ENCODE measurements at regions of chr1 and their contacts with region 1.

Region 1: DNA sequence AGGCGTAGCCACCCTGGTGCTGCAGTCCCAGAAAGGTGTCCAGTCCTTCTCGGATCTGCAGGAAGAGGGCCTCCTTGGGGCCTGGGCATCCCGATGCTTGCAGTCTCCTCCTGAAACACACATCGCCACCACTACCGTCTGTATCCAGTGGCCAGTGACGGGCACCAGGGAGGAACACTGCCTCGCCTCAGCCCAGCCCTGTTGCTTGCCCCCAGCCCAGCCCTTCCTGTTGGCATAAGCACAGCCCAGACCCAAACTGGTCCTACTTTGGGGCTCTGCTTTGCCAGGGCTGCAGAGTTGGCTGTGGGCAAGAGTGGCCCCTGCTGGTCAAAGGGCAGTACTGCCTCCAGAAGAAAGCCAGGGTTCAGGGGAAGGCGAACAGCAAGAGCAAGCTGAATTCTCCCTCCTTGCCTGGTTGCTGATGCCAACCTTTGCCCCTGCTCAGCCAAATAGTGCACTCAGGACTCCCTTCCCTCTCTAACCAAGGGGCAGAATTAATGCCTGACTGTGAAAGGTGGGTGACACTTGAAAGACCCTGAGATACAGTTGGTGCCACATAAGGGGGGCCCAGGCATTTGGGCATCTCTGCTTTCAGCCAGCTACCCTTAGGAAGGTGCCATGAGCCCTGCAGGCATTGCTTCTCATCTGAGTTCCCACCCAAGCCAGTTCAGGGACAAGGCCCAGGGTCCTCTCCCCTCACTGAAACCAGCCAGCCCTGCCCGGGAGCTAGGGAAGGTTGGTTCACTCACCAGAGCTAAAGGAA is 11.1 kb upstream of the ARHGEF2 start:
- DNase-seq: peak; percentile 93

Region 2: GRCh38 chr1:155938220-155938627 is 51.2 kb before region 1 on chr1:
- intact Hi-C with region 1: loop called in 1 of 2 experiments (anchors 1 kb)
- DNase-seq: no peak

Region 3: DNA sequence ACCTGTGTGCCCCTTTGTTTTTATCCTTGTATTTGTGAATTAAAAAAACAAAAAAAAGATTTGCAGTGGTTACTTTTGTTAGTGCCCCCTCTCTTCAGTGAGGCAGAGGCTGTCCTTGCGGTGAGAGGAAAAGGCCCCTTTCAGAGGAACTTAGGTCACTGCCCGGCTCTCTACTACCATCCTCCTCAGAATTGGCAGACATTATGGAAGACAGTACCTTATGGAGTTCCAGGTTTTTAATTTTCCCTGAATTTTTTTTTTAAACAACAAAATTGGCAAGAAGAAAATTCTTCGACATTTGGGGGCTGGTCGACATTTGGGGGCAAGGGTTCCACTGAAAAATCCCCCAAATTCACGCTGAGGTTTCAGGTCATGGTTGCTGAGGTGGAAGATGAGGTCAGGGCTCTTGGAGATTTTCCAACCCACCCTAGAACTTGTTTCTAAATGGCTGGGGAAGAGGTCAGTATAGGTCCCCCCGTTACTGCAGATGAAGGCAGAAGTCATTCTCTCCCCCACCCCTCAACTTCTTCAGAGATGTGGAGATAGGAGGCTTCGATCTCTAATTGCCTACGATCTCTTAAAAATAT is 42.7 kb before region 1 on chr1:
- intact Hi-C with region 1: loop called in 1 of 2 experiments (anchors 5 kb)
- DNase-seq: no peak

Region 4: DNA sequence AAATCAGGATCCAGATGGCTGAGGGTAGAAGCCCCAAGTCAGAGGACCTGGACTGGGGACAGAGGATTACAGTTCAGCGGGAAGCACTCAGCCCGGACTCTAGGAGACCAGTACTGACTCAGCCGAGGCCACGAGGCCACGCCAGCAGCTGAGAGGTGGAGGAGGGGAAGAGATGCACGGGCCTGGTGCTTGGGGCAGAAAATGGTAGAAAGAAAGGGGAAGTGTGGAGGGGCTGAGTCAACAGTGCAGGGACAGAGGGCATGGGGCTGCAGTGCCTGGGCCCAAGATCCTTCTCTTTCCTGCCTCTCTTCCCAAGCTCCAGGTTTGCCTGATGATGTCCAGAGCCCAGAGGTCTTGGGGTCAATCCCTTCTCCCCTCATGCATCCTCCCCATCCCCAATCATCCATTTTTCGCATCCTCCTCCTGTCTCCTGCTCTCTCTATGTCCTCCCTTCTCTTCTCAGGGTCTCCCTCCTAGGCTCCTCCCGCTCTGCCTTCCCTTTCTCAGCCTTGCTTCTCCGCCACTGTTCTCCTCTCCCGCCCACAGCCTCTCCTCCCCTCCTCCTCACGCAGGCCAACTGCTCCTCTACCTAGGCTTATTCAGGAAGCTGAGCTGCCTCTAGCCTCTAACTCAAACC is 18.8 kb before region 1 on chr1:
- intact Hi-C with region 1: loop called in 1 of 2 experiments (anchors 2 kb)
- DNase-seq: peak; percentile 94

Region 5: DNA sequence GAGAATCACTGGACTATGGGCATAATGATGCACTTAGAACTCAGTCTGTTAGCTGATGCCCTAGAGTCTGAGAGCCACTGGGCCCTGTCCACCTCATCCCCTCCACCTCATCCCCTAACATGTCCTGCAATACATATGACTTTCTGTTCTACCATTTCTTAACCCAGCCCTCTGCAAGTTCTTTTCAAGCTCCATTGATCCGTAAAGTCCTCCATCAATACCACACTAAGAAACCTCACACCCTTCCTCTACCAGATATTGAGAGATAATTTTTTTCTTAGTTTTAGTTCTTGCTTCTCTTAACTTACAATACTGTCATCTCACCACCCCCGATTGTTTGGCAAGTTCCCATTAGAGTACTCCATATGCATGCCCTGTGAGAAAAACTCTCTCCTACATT is 1586.3 kb after region 1 on chr1:
- intact Hi-C with region 1: no loop called
- DNase-seq: no peak